Activated naive CD4-positive, alpha-beta T cell treated with anti-CD3 and anti-CD28 coated beads for 36 hours (primary cell): ENCODE measurements at regions of chr22 and their contacts with region 1.

Region 1: GRCh38 chr22:35150183-35151107 is 84.5 kb downstream of the ISX start:
- DNase-seq: peak; percentile 80
- H3K4me3 Mint-ChIP-seq: no peak overlapping the region
- H3K27ac Mint-ChIP-seq: no peak overlapping the region
- H3K4me1 Mint-ChIP-seq: peaks cover 2% of the 10 kb centered on the region
- H3K27me3 Mint-ChIP-seq: peaks cover 28% of the 10 kb centered on the region

Region 2: GRCh38 chr22:33302049-33302545 is 1848.3 kb before region 1 on chr22:
- CTCF ChIA-PET with region 1: no interaction called
- intact Hi-C with region 1: loop called (anchors 5 kb)
- DNase-seq: peak; percentile 75
- H3K4me3 Mint-ChIP-seq: no peak overlapping the region
- H3K27ac Mint-ChIP-seq: no peak overlapping the region
- H3K4me1 Mint-ChIP-seq: no peaks in the 10 kb centered on the region
- H3K27me3 Mint-ChIP-seq: peaks cover 5% of the 10 kb centered on the region

Region 3: DNA sequence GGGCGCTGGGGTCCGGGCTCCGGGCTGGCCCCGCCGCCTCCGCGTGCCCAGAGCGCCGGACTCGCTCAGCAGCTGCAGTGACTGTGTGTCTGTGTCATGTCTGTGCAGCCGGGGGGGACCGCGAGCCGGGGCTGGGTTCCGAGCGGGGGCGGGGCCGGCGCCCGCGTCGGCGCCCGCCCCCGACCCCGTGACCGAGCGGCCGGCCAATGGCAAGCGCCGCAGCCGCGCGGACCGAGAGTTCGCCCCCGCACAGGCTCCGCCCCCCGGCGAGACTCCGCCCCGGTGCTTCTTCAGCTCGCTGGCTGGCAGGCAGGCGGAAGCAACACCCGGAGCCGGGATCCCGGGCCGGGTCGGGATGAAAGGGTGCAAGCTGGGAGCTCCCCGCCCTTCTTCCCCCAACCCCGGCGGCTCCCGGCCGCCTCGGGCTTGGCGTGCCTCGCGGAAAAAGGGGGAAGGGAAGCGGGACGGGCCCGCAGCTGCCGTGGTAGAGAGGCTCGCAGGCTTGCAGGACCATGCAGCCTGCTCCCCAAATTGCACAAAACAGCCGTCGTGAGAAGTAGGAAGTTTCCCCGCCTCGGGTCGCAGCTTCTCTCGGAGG is 1229.4 kb before region 1 on chr22:
- CTCF ChIA-PET with region 1: no interaction called
- intact Hi-C with region 1: loop called (anchors 10 kb)
- DNase-seq: peak; percentile 94
- H3K4me3 Mint-ChIP-seq: peak overlapping the region; percentile 68
- H3K27ac Mint-ChIP-seq: no peak overlapping the region
- H3K4me1 Mint-ChIP-seq: peaks cover 19% of the 10 kb centered on the region
- H3K27me3 Mint-ChIP-seq: peaks cover 66% of the 10 kb centered on the region

Region 4: DNA sequence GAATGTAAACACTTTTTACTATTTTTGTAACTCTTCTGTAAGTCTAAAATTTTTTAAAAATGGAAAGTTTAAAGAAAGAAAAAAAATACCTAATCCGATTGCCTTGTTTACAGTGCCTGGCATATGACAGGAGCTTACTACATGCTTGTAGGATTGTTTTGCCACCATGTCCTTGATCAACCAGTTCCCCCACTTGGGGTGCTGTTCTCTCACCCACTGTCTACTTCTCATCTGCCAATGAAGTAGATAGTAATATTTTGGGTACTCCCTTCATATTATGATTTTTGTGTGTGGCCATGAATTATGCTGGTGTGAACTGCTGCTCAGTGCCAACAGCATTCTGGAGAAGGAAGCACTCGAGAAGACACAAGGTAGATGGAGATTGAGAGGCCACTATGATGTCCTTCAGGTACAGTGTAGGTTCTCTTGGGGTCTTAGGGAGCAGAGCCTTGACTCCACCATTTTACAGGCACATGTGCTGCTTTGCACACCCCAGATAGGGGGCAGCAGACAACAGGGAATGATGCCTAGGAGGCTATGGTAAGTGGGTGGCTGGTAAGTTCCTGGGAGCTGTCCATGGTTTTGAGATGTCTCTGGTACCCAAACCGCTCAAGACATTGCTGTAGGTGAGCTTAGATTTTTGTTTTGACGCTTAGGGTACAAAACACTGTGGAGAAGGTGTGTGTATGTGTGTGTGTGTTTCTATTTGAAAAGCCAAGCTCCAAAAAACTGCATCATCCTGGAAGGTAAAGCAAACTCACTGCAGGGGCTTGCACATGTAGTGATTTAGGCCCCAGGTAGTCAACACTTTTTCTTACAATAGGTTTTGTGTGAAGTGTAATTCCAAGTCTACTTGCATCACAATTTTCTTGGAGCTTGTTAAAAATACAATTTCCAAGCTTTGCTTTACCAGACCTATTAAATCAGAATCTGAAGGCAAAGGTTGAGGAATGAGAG is 735.7 kb before region 1 on chr22:
- CTCF ChIA-PET with region 1: interaction called, 3 read pairs
- intact Hi-C with region 1: loop called (anchors 10 kb)
- DNase-seq: peak; percentile 60
- H3K4me3 Mint-ChIP-seq: no peak overlapping the region
- H3K27ac Mint-ChIP-seq: no peak overlapping the region
- H3K4me1 Mint-ChIP-seq: no peaks in the 10 kb centered on the region
- H3K27me3 Mint-ChIP-seq: peaks cover 5% of the 10 kb centered on the region

Region 5: GRCh38 chr22:34847072-34847471 is 303.4 kb before region 1 on chr22:
- CTCF ChIA-PET with region 1: no interaction called
- intact Hi-C with region 1: loop called (anchors 10 kb)
- DNase-seq: no peak
- H3K4me3 Mint-ChIP-seq: no peak overlapping the region
- H3K27ac Mint-ChIP-seq: no peak overlapping the region
- H3K4me1 Mint-ChIP-seq: peaks cover 7% of the 10 kb centered on the region
- H3K27me3 Mint-ChIP-seq: peaks cover 19% of the 10 kb centered on the region

Region 6: DNA sequence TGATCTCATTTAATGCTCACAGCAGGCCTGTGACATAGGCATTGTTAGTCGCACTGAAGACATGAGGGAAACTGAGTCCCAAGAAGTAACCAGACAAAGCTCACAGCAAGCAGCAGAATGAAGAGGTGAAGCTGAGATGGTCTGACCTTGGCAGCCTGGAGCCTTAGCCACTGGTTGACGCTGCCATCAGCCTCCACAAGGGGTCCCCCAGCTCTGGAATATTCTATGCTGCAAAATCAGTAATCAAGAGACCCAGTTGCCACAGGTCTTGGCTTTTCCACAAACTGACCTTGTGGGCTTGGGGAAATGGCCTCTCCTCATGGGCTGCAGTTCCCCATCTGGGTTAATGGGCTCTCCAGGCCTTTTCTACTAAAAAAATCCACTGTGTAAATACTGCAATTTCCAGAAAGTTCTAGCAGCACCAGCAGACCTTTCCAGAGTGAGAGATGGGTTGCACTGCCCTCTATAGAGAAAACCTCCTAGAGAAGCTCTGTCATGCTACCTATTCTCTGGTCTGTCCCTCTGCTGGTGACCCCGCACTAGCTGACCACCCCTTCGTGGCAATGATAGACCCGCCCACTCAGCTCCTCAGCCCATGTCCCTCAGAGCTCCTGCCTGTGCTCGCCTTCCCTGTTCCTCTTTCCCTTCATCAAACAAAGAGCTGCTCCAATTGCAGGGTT is 107.1 kb before region 1 on chr22:
- CTCF ChIA-PET with region 1: no interaction called
- intact Hi-C with region 1: loop called (anchors 1 kb)
- DNase-seq: peak; percentile 17
- H3K4me3 Mint-ChIP-seq: no peak overlapping the region
- H3K27ac Mint-ChIP-seq: no peak overlapping the region
- H3K4me1 Mint-ChIP-seq: no peaks in the 10 kb centered on the region
- H3K27me3 Mint-ChIP-seq: peaks cover 17% of the 10 kb centered on the region

Region 7: DNA sequence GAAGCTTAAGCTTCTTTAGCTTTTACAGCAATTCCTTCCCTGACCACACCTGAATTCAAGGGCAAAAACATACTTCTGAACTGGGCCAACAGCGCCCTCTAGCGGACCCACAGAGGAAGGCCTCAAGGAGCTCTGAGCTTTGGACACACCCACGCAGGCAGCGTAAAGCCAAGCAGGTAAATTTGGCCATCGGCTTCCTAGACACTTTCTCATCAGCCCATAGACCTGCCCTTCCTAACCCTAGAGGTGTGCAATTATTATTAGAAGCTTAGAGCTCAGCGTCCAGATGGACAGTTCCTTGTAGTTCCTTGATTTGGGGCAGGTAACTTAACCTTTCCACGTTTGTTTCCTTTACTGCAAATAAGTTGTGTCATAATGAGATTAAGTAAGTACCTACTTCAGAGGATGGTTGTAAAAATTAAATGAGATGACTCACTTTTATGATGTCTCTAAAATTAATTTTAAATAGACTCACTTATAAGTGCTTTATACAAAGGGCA is 81.2 kb after region 1 on chr22:
- CTCF ChIA-PET with region 1: interaction called, 7 read pairs
- intact Hi-C with region 1: loop called (anchors 2 kb)
- DNase-seq: peak; percentile 85
- H3K4me3 Mint-ChIP-seq: no peak overlapping the region
- H3K27ac Mint-ChIP-seq: no peak overlapping the region
- H3K4me1 Mint-ChIP-seq: peaks cover 2% of the 10 kb centered on the region
- H3K27me3 Mint-ChIP-seq: peaks cover 3% of the 10 kb centered on the region